ENCODE measurements at regions of chr5 and their contacts with region 1.

Region 1: DNA sequence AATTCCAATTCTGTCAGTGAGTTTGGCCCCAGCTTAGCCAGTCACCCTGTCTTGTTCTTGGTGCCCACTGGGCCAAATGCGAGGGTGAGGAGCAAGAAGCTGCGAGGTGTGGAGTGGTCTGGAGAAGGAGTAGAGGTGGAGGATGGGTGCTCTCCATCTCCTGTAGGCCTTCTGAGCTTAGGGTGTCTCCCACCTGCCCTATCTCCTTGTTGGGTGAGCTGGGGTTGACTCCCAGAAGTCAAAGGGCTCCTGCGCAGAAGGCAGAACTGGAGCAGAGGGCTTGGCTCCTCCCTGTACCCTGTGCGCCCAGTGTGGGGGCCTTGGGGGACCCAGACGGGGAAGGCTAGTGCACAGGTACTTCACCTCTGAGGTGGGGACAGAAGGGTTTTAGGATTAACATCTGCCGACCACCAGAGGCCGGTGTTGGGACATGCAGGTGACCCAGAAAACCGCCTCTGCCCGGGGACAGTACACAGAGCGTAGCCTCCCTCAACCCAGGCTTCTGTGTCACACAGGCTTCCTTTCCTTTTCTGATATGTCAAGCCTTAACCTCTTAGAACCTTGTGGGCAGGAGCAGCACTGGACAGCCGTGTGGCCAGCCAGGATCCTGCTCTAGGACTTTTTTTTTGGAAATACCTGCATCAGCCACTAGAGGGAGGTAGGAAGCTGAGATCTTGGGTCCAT is 16.9 kb downstream of the IL5 start:
- DNase-seq: peak; percentile 59 to 69
- ATAC-seq: peak; percentile 83 to 94
- H3K4me3 ChIP-seq: no peak overlapping the region
- H3K27ac ChIP-seq: peak overlapping the region in 1 of 2 experiments; percentile 62; a peak in 1 of 6 replicates
- H3K4me1 ChIP-seq: no peaks in the 10 kb centered on the region
- CTCF ChIP-seq: peak; percentile 98
- EP300 ChIP-seq: no peak
- POLR2A ChIP-seq: no peak
- RAD21 ChIP-seq: peak; percentile 70 to 83

Region 2: DNA sequence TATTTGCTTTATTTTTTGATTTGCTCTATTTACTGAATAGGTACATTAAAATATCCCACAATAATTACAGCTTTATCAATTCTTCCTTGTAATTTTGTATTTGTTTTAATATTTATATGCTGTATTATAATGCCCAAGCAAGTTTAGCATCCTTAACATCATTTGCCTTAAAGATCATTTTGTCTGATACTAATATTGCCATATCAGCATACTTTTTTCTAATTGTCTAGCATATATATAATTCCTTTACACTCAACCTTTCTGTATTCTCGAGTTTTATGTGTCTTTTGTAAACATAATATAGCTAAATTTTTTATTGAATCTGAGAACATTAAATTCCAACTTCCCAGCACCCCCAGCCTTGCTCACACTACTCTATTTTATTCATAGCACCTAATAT is 363.5 kb before region 1 on chr5:
- CTCF ChIA-PET with region 1: no interaction called
- POLR2A ChIA-PET with region 1: no interaction called
- DNase-seq: no peak
- ATAC-seq: no peak
- H3K4me3 ChIP-seq: no peak overlapping the region
- H3K27ac ChIP-seq: no peak overlapping the region
- H3K4me1 ChIP-seq: no peaks in the 10 kb centered on the region
- CTCF ChIP-seq: no peak
- EP300 ChIP-seq: no peak
- POLR2A ChIP-seq: no peak
- RAD21 ChIP-seq: no peak

Region 3: DNA sequence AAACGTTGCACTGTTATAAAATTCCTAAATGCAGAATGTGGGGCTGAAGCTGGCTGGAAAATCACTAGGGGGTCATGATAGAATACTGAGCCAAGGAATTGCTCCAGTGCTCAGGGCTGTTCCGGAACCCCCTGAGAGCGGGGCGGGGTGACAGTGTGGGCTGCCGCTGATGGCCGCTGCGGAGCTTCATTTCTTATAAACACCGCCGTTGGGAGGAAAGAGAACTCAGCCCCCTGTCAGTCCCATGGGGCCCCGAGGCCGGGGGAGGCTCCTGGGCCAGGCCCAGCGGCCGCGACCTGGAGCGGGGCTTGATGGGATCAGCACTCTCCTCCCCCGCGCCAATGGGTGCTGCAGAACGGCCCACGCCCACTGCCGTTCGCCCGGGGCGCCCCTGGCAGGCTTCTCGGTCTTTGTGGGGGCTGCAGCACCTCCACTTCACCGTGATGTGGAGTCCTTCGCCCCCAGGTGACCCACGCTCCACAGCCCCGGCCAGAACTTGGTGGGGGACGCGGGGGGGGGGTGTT is 30.7 kb before region 1 on chr5:
- CTCF ChIA-PET with region 1: interaction called, 14 read pairs
- POLR2A ChIA-PET with region 1: no interaction called
- DNase-seq: peak; percentile 82 to 83
- ATAC-seq: peak; percentile 56 to 74
- H3K4me3 ChIP-seq: peak overlapping the region; percentile 56
- H3K27ac ChIP-seq: peak overlapping the region; percentile 88 to 97
- H3K4me1 ChIP-seq: peaks cover 52% of the 10 kb centered on the region
- CTCF ChIP-seq: no peak
- EP300 ChIP-seq: 0 out of 5 replicates have a peak, but pooled peaks of 1 of the 2 experiments have one; percentile 15
- POLR2A ChIP-seq: peak; percentile 24
- RAD21 ChIP-seq: no peak

Region 4: GRCh38 chr5:132506094-132506692 is 20.2 kb before region 1 on chr5:
- CTCF ChIA-PET with region 1: interaction called, 13 read pairs
- POLR2A ChIA-PET with region 1: no interaction called
- DNase-seq: peak; percentile 63 to 64
- ATAC-seq: peak; percentile 87 to 91
- H3K4me3 ChIP-seq: no peak overlapping the region
- H3K27ac ChIP-seq: 0 out of 6 replicates have a peak overlapping the region, but pooled peaks of 1 of the 2 experiments have one; percentile 15
- H3K4me1 ChIP-seq: peaks cover 9% of the 10 kb centered on the region
- CTCF ChIP-seq: peak; percentile 48
- EP300 ChIP-seq: no peak
- POLR2A ChIP-seq: no peak
- RAD21 ChIP-seq: peak in 1 of 2 experiments; percentile 51; a peak in 2 of 5 replicates

Region 5: GRCh38 chr5:132546108-132546507 is 19.7 kb after region 1 on chr5:
- CTCF ChIA-PET with region 1: interaction called, 13 read pairs
- POLR2A ChIA-PET with region 1: no interaction called
- DNase-seq: no peak
- ATAC-seq: no peak
- H3K4me3 ChIP-seq: no peak overlapping the region
- H3K27ac ChIP-seq: no peak overlapping the region
- H3K4me1 ChIP-seq: no peaks in the 10 kb centered on the region
- CTCF ChIP-seq: no peak
- EP300 ChIP-seq: no peak
- POLR2A ChIP-seq: no peak
- RAD21 ChIP-seq: no peak

Region 6: DNA sequence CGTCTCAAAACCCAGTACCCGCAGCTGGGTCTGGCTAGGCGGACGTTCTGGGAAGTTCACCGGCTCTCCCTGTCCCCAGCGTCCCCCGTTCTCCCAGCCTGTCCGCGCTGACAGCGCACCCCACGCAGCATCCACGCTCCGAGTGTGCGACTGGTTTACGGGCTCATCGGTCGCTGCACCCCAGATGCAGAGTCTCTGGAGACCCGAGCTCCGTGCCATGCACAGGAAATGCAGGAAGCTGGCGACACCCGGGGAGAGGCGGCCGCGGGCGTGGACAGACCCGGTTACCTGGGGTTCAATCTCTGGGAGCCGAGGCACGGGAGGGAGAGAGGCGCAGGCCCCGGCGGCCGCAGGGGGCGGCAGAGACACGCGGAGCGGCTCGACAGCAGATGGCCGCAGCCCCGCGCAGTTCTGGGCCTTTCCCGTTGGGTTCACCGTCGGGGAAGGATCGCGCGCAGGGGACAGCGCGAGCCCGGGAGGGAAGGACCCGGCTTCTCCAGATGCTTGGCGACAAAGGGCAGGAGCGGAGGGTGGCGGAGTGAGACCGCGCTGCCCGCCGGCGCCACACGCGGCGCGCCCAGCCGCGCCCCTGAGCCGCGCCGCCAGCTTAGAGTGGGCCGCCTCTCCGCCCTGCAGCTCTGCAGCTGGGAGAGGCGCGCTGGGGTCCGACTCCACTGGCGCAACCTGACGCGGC is 303.5 kb after region 1 on chr5:
- CTCF ChIA-PET with region 1: interaction called, 15 read pairs
- POLR2A ChIA-PET with region 1: no interaction called
- DNase-seq: peak; percentile 75 to 95
- ATAC-seq: peak; percentile 94
- H3K4me3 ChIP-seq: peak overlapping the region; percentile 59
- H3K27ac ChIP-seq: peak overlapping the region; percentile 75 to 96
- H3K4me1 ChIP-seq: peaks cover 3% of the 10 kb centered on the region; the same call in 1 of the 3 replicates
- CTCF ChIP-seq: peak; percentile 69
- EP300 ChIP-seq: no peak
- POLR2A ChIP-seq: peak; percentile 37; the same call in 1 of the 2 replicates
- RAD21 ChIP-seq: peak; percentile 65 to 82; a peak in 4 of 5 replicates

Measured in A549 (cell line).